B cell (primary cell): ENCODE measurements at regions of chr5 and their contacts with region 1.

Region 1: GRCh38 chr5:134275822-134276221 is 49.9 kb upstream of the PPP2CA start:
- DNase-seq: no peak
- ATAC-seq: no peak
- H3K4me3 ChIP-seq: no peak overlapping the region
- H3K4me3 Mint-ChIP-seq: no peak overlapping the region
- H3K27ac ChIP-seq: no peak overlapping the region
- H3K27ac Mint-ChIP-seq: no peak overlapping the region
- H3K4me1 ChIP-seq: no peaks in the 10 kb centered on the region
- H3K4me1 Mint-ChIP-seq: no peaks in the 10 kb centered on the region
- H3K27me3 ChIP-seq: peaks cover 0 to 9% (median 1%) of the 10 kb centered on the region in 4 experiments
- H3K27me3 Mint-ChIP-seq: peaks cover 13% of the 10 kb centered on the region
- CTCF ChIP-seq: no peak

Region 2: GRCh38 chr5:134813407-134813806 is 537.6 kb after region 1 on chr5:
- CTCF ChIA-PET with region 1: no interaction called
- POLR2A ChIA-PET with region 1: interaction called, 14 read pairs
- intact Hi-C with region 1: no loop called
- DNase-seq: peak; percentile 37
- ATAC-seq: peak; percentile 67
- H3K4me3 ChIP-seq: peak overlapping the region in 1 of 5 experiments; percentile 1
- H3K4me3 Mint-ChIP-seq: peak overlapping the region; percentile 54
- H3K27ac ChIP-seq: peak overlapping the region; percentile 32 to 74
- H3K27ac Mint-ChIP-seq: peak overlapping the region; percentile 53
- H3K4me1 ChIP-seq: peaks cover 10 to 16% of the 10 kb centered on the region in 2 donors
- H3K4me1 Mint-ChIP-seq: peaks cover 14% of the 10 kb centered on the region
- H3K27me3 ChIP-seq: no peaks in the 10 kb centered on the region
- H3K27me3 Mint-ChIP-seq: no peaks in the 10 kb centered on the region
- CTCF ChIP-seq: no peak